Posterior vena cava (tissue), 2 donors: ENCODE measurements at regions of chr2 and their contacts with region 1.

Region 1: GRCh38 chr2:205885492-205886099 is 200.4 kb downstream of the INO80D start:
- DNase-seq: peak; percentile 95

Region 2: DNA sequence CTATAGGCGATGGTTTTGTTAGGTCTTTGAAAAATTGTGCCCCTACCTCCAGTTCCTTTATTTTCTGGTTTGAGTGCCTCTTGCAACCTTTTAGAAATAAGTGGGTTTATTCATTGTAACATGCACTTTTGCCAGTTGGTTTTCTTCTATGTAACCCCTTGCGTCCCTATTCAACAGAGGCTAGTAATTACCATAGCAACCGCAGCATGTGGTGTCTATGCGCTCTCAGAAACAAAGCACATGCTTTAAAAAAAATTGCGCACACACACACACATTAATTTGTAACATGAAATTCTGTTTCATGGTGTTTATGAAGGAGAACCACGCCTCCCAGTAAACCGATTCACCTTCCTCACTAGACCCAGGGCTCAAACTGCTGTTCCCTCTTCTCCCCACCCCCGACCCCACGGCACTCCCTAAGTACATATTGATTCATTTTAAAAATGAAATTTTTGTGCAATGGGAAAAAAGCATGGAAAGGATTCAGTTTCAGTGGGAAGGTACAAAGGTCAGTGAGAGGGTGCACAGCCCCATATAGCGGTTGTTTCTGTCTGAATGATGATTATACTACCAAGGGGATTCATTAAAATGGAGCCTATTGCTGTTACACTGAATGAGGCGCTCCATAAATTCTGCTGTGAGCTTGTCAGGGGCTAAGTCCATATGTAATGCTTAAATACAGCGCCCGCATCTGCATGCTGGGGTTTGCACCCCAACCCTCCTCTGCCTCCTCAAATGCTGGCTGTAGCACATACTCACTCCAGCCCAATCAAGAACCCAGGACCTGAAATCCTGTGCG is 1742.2 kb before region 1 on chr2:
- intact Hi-C with region 1: loop called in 1 of 2 experiments (anchors 5 kb)
- DNase-seq: no peak

Region 3: GRCh38 chr2:205680067-205680466 is 205.5 kb before region 1 on chr2:
- intact Hi-C with region 1: loop called in 1 of 2 experiments (anchors 10 kb)
- DNase-seq: no peak

Region 4: GRCh38 chr2:205766779-205767359 is 118.7 kb before region 1 on chr2:
- intact Hi-C with region 1: loop called in 1 of 2 experiments (anchors 10 kb)
- DNase-seq: no peak

Region 5: GRCh38 chr2:205776139-205776538 is 109.5 kb before region 1 on chr2:
- intact Hi-C with region 1: loop called in 1 of 2 experiments (anchors 5 kb)
- DNase-seq: peak; percentile 80

Region 6: DNA sequence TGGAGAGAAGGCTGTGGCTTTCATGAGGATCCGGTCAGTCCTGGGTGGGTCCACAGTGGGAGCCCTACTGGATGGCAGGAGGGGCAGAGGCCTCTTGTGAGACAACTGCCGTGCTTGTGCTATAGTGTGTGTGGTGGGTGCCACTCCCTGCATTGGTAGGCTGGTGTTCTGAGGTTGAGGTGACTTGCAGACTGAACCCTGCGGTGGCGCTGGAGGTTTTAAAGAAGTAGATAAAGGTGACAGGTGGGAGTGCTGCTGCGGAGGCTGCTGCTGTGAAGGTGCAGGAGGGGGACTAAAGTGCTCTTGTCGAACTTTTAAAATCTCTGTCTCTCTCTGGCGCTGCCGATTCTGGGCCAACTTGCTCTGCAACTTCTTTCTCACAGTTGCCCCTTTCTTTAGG is 170.7 kb after region 1 on chr2:
- intact Hi-C with region 1: no loop called
- DNase-seq: no peak

Region 7: GRCh38 chr2:206086716-206087350 is 201.2 kb after region 1 on chr2:
- intact Hi-C with region 1: no loop called
- DNase-seq: no peak